Tibial artery (tissue), 4 donors: ENCODE measurements at regions of chr1 and their contacts with region 1.

Region 1: GRCh38 chr1:147494998-147495580 is 46.2 kb upstream of the BCL9 start:
- DNase-seq: peak; percentile 78 to 84
- H3K4me3 ChIP-seq: no peak overlapping the region
- H3K27ac ChIP-seq: no peak overlapping the region
- H3K4me1 ChIP-seq: no peaks in the 10 kb centered on the region
- H3K27me3 ChIP-seq: no peaks in the 10 kb centered on the region
- CTCF ChIP-seq: peak; percentile 93 to 94

Region 2: GRCh38 chr1:147545133-147545532 is 50.0 kb after region 1 on chr1:
- intact Hi-C with region 1: loop called (anchors 10 kb)
- DNase-seq: no peak
- H3K4me3 ChIP-seq: no peak overlapping the region
- H3K27ac ChIP-seq: no peak overlapping the region
- H3K4me1 ChIP-seq: peaks cover 0 to 25% (median 11%) of the 10 kb centered on the region in 4 donors
- H3K27me3 ChIP-seq: no peaks in the 10 kb centered on the region
- CTCF ChIP-seq: no peak

Region 3: GRCh38 chr1:147627435-147628110 is 132.5 kb after region 1 on chr1:
- intact Hi-C with region 1: loop called (anchors 1 kb)
- DNase-seq: peak in 1 of 2 donors; percentile 43
- H3K4me3 ChIP-seq: no peak overlapping the region
- H3K27ac ChIP-seq: no peak overlapping the region
- H3K4me1 ChIP-seq: no peaks in the 10 kb centered on the region
- H3K27me3 ChIP-seq: no peaks in the 10 kb centered on the region
- CTCF ChIP-seq: peak; percentile 86 to 92

Region 4: DNA sequence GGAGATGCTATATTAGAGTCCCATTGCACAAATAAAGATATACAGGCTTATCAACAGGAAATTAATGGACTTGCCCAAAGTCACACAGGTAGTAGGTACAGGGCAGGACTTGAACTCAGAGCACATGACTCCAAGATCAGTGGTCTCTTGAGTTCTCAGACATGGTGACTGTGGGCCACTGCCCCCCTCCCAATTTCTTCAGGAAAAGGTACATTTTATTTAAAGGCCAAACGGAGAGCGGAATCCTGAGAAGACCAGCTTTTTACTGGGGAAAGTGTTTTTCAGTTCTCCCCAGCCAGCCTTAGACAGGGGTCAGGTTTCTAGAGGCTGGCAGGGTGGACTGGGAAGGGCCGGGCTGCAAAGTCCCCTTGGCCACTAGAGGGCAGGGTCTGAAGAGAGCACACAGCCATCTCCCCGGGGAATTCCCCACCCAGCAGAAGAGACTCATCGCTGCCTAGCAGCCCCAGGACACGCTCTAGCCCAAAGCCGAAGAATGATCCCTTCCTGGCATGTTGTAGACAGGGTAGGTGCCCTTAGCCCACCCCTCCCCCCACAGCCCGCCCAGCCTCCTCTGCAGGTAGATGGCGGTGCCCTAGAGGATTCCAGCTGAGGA is 145.6 kb after region 1 on chr1:
- intact Hi-C with region 1: loop called (anchors 5 kb)
- DNase-seq: peak in 1 of 2 donors; percentile 34
- H3K4me3 ChIP-seq: no peak overlapping the region
- H3K27ac ChIP-seq: no peak overlapping the region
- H3K4me1 ChIP-seq: no peaks in the 10 kb centered on the region
- H3K27me3 ChIP-seq: no peaks in the 10 kb centered on the region
- CTCF ChIP-seq: peak; percentile 53 to 55

Region 5: GRCh38 chr1:147882535-147882934 is 387.4 kb after region 1 on chr1:
- intact Hi-C with region 1: loop called (anchors 10 kb)
- DNase-seq: no peak
- H3K4me3 ChIP-seq: no peak overlapping the region
- H3K27ac ChIP-seq: no peak overlapping the region
- H3K4me1 ChIP-seq: no peaks in the 10 kb centered on the region
- H3K27me3 ChIP-seq: no peaks in the 10 kb centered on the region
- CTCF ChIP-seq: no peak